Caco-2 (cell line): ENCODE measurements at regions of chr11 and their contacts with region 1.

Region 1: DNA sequence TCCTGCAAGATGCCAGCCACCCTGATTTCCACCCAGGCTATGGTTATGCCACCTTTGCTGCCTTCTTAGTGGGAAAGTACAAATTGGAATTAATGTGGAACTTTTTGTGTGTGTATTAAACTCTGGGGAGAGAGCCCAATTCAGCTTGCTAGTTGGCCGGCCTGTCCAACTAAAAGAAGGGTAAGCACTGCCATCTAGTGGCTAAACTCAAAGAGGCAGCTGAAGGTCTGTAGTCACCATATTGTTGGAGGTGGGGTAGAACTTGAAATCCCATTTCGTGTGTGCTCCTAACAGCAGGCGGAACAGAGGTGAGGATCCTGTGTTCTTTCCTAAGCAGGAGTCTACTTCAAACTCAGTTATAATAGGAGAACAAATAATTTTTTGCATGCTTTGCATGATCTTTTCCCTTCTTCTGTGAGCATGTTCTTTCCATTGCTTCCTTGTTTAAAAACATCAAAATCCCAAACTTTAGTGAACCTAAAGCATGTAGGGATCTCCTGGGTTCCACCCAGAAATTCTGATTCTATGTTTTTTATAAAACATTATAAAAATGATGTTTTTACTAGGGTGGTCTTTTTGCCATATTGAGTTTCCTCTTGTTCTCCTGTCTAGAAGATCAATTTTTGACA is 138.8 kb upstream of the SORL1-AS1 start:
- DNase-seq: peak; percentile 79 to 90
- H3K4me3 ChIP-seq: no peak overlapping the region
- H3K4me3 Mint-ChIP-seq: no peak overlapping the region
- H3K27ac Mint-ChIP-seq: no peak overlapping the region
- H3K4me1 ChIP-seq: peaks cover 9% of the 10 kb centered on the region
- H3K4me1 Mint-ChIP-seq: no peaks in the 10 kb centered on the region
- H3K27me3 ChIP-seq: no peaks in the 10 kb centered on the region
- H3K27me3 Mint-ChIP-seq: no peaks in the 10 kb centered on the region
- CTCF ChIP-seq: peak; percentile 96

Region 2: GRCh38 chr11:121119440-121119839 is 472.1 kb before region 1 on chr11:
- CTCF ChIA-PET with region 1: no interaction called
- POLR2A ChIA-PET with region 1: no interaction called
- intact Hi-C with region 1: loop called (anchors 2 kb)
- DNase-seq: peak in 1 of 2 experiments; percentile 20
- H3K4me3 ChIP-seq: no peak overlapping the region
- H3K4me3 Mint-ChIP-seq: no peak overlapping the region
- H3K27ac Mint-ChIP-seq: no peak overlapping the region
- H3K4me1 ChIP-seq: no peaks in the 10 kb centered on the region
- H3K4me1 Mint-ChIP-seq: no peaks in the 10 kb centered on the region
- H3K27me3 ChIP-seq: no peaks in the 10 kb centered on the region
- H3K27me3 Mint-ChIP-seq: peaks cover 11% of the 10 kb centered on the region
- CTCF ChIP-seq: peak; percentile 22 to 42

Region 3: DNA sequence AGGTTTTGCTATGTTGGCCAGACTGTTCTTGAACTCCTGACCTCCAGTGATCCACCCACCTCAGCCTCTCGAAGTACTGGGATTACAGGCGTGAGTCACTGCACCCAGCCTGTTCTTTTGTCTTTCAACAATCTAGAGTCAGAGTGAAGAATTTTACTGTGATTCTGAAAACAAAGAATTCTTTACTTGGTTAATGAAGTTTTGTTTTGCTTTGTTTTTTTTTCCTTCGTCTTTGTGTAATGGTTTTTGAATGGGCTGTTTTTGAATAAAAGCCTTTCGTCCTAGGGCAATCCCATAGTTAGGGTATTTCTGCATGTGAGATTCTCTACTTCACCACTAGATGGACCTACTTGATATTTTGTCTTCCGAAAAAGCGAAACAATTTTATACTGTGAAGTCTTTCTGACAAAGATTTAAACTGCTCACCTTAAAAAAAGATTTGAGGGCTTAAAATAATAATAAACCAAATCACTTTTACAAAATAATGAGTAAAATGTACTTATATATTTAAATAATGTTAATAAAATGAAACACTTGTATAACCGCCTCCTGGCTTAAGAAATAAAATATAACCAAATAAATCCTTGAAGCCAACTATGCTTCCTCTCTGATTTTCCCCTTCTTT is 342.4 kb before region 1 on chr11:
- CTCF ChIA-PET with region 1: interaction called, 5 read pairs
- POLR2A ChIA-PET with region 1: no interaction called
- intact Hi-C with region 1: loop called (anchors 1 kb)
- DNase-seq: peak in 1 of 2 experiments; percentile 37
- H3K4me3 ChIP-seq: no peak overlapping the region
- H3K4me3 Mint-ChIP-seq: no peak overlapping the region
- H3K27ac Mint-ChIP-seq: no peak overlapping the region
- H3K4me1 ChIP-seq: peaks cover 11% of the 10 kb centered on the region
- H3K4me1 Mint-ChIP-seq: peaks cover 18% of the 10 kb centered on the region
- H3K27me3 ChIP-seq: no peaks in the 10 kb centered on the region
- H3K27me3 Mint-ChIP-seq: no peaks in the 10 kb centered on the region
- CTCF ChIP-seq: peak; percentile 69 to 94

Region 4: DNA sequence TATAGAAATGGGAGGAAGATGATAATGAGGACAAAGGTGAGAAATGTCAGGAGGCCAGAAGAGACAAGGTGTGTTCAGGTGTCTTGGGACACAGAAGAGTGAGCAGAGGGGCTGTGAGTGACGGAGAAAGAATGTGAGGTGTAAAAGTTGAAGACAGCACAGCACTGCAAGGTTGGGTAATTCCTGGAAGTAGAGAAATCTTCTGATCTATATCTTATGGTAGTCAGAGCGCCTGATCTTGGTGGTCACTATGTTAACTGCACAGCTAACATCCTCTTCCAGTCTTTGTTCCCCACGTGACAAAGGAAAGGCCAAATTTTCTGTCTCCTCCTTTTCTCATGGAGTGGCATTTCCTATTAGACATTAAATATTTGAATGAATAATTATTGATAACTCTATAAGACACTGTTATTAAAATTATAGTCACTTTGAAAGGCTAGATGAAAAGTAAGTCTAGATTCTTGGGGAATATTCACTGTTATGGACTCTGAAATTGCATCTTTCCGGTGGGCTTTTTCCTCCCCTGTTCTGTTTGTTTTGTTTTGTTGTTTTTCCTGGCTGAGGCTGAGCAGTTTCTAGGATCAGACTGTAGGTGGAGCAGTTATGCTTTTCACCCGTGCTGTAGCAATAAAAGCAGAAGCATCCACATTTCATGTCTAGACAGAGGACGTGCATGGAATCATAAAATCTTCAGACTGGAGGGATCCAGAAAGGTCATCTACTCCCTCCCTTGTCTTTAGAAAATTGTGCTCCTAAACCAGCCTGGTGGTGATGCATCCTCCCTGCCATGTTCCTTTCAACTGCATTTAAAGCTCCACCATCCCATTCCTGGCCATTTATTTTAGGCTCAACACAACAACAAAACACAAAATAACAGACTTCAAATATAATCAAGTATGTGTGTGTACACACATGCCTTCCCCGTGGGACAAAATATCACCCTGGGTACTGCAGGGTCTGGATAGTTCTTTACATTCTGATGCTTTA is 272.4 kb before region 1 on chr11:
- CTCF ChIA-PET with region 1: interaction called, 8 read pairs
- POLR2A ChIA-PET with region 1: no interaction called
- intact Hi-C with region 1: loop called (anchors 1 kb)
- DNase-seq: peak in 1 of 2 experiments; percentile 61
- H3K4me3 ChIP-seq: no peak overlapping the region
- H3K4me3 Mint-ChIP-seq: no peak overlapping the region
- H3K27ac Mint-ChIP-seq: no peak overlapping the region
- H3K4me1 ChIP-seq: peaks cover 4% of the 10 kb centered on the region; the same call in 1 of the 2 replicates
- H3K4me1 Mint-ChIP-seq: peaks cover 18% of the 10 kb centered on the region
- H3K27me3 ChIP-seq: no peaks in the 10 kb centered on the region
- H3K27me3 Mint-ChIP-seq: peaks cover 12% of the 10 kb centered on the region
- CTCF ChIP-seq: peak; percentile 88 to 95

Region 5: GRCh38 chr11:121389651-121390050 is 201.9 kb before region 1 on chr11:
- CTCF ChIA-PET with region 1: no interaction called
- POLR2A ChIA-PET with region 1: no interaction called
- intact Hi-C with region 1: no loop called
- DNase-seq: no peak
- H3K4me3 ChIP-seq: no peak overlapping the region
- H3K4me3 Mint-ChIP-seq: no peak overlapping the region
- H3K27ac Mint-ChIP-seq: no peak overlapping the region
- H3K4me1 ChIP-seq: no peaks in the 10 kb centered on the region
- H3K4me1 Mint-ChIP-seq: no peaks in the 10 kb centered on the region
- H3K27me3 ChIP-seq: peaks cover 2% of the 10 kb centered on the region; the same call in 1 of the 2 replicates
- H3K27me3 Mint-ChIP-seq: peaks cover 17% of the 10 kb centered on the region
- CTCF ChIP-seq: no peak

Region 6: GRCh38 chr11:121446752-121447156 is 144.8 kb before region 1 on chr11:
- CTCF ChIA-PET with region 1: interaction called, 9 read pairs
- POLR2A ChIA-PET with region 1: no interaction called
- intact Hi-C with region 1: loop called (anchors 1 kb)
- DNase-seq: no peak
- H3K4me3 ChIP-seq: no peak overlapping the region
- H3K4me3 Mint-ChIP-seq: no peak overlapping the region
- H3K27ac Mint-ChIP-seq: no peak overlapping the region
- H3K4me1 ChIP-seq: peaks cover 19% of the 10 kb centered on the region
- H3K4me1 Mint-ChIP-seq: peaks cover 18% of the 10 kb centered on the region
- H3K27me3 ChIP-seq: no peaks in the 10 kb centered on the region
- H3K27me3 Mint-ChIP-seq: no peaks in the 10 kb centered on the region
- CTCF ChIP-seq: peak in 1 of 2 experiments; percentile 8

Region 7: GRCh38 chr11:121780971-121781370 is 189.5 kb after region 1 on chr11:
- CTCF ChIA-PET with region 1: no interaction called
- POLR2A ChIA-PET with region 1: no interaction called
- intact Hi-C with region 1: no loop called
- DNase-seq: no peak
- H3K4me3 ChIP-seq: no peak overlapping the region
- H3K4me3 Mint-ChIP-seq: no peak overlapping the region
- H3K27ac Mint-ChIP-seq: no peak overlapping the region
- H3K4me1 ChIP-seq: no peaks in the 10 kb centered on the region
- H3K4me1 Mint-ChIP-seq: no peaks in the 10 kb centered on the region
- H3K27me3 ChIP-seq: no peaks in the 10 kb centered on the region; the same call in 1 of the 2 replicates
- H3K27me3 Mint-ChIP-seq: peaks cover 13% of the 10 kb centered on the region
- CTCF ChIP-seq: no peak